Sciatic nerve (tissue), 2 donors: ENCODE measurements at regions of chr14 and their contacts with region 1.

Region 1: GRCh38 chr14:93788543-93789227 is 400 bp upstream of the PRIMA1 start:
- DNase-seq: peak; percentile 74
- ATAC-seq: peak; percentile 86

Region 2: GRCh38 chr14:93736378-93737014 is 52.2 kb before region 1 on chr14:
- intact Hi-C with region 1: loop called (anchors 10 kb)
- DNase-seq: no peak
- ATAC-seq: no peak

Region 3: GRCh38 chr14:93984987-93985410 is 196.3 kb after region 1 on chr14:
- intact Hi-C with region 1: no loop called
- DNase-seq: no peak
- ATAC-seq: no peak